PC-9 (cell line): ENCODE measurements at regions of chr10 and their contacts with region 1.

Region 1: GRCh38 chr10:2978111-2978510 is 89.2 kb upstream of the PFKP start:
- DNase-seq: peak in 1 of 2 experiments; percentile 35
- H3K4me3 ChIP-seq: no peak overlapping the region
- H3K27ac ChIP-seq: no peak overlapping the region
- H3K4me1 ChIP-seq: no peaks in the 10 kb centered on the region
- H3K27me3 ChIP-seq: peaks cover 5% of the 10 kb centered on the region; the same call in 1 of the 2 replicates
- CTCF ChIP-seq: peak; percentile 59

Region 2: DNA sequence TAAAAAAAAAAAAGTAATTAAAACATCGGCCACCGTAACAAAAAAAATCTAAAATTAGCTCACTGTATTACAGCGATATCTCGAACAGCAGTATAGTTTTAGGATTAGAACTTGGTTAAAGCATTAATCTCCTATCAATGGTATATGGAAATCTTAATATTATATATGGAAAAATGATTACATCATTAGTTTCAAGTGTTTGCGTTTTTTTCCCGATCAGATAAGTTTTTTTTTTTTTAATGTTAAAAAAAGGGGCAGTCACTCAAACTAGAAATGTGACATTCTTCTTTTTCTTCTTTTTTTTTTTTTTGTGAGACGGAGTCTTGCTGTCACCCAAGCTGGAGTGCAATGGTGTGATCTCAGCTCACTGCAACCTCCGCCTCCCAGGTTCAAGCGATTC is 1936.6 kb before region 1 on chr10:
- CTCF ChIA-PET with region 1: no interaction called
- POLR2A ChIA-PET with region 1: interaction called, 15 read pairs
- intact Hi-C with region 1: no loop called
- DNase-seq: no peak
- H3K4me3 ChIP-seq: no peak overlapping the region
- H3K27ac ChIP-seq: no peak overlapping the region
- H3K4me1 ChIP-seq: no peaks in the 10 kb centered on the region
- H3K27me3 ChIP-seq: no peaks in the 10 kb centered on the region
- CTCF ChIP-seq: no peak

Region 3: GRCh38 chr10:3126741-3127361 is 148.7 kb after region 1 on chr10:
- CTCF ChIA-PET with region 1: no interaction called
- POLR2A ChIA-PET with region 1: no interaction called
- intact Hi-C with region 1: no loop called
- DNase-seq: no peak
- H3K4me3 ChIP-seq: no peak overlapping the region
- H3K27ac ChIP-seq: no peak overlapping the region
- H3K4me1 ChIP-seq: peaks cover 8% of the 10 kb centered on the region
- H3K27me3 ChIP-seq: no peaks in the 10 kb centered on the region
- CTCF ChIP-seq: no peak